Vagina (tissue), 2 donors: ENCODE measurements at regions of chr17 and their contacts with region 1.

Region 1: DNA sequence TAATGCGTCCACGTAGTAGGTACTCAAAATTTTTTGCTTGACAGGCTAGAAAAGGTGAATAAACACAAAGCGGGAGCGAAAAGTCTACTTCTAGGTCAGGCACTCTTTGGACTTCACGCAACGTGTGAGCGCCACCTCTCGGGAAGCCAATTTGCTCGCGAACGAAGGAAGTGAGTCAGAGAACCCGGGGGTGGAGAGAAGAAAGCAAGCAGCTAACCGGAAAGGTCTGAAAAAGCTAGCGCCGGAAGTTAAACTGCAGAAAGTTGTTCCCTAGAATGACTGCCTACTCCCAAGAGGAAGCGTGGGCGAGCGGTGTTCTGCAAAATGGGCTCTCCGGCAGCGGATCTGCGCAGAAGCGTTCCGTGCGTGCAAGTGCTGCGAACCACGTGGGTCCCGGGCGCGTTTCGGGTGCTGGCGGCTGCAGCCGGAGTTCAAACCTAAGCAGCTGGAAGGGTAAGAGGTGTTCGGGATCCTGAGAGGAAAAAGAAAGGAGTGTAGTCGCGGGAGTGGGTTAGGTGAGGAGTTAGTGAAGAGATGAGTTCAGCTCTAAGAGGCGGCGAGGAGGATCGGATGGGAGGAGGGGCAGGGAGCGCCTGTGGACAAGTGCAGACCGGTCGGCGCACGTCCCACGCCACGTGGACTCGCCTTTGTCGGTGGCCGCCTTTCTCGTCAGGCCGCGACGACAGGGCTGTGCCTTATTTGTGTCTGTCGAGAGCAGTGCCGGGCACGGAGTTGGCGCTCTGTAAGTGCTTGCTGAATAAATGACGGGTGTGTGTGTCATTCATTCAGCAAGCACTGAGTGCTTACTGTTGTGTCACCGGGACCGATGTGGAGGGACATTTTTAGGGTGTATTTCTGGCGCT is at the start of gene NME1:
- DNase-seq: peak; percentile 99 to 100
- H3K4me3 ChIP-seq: peak within 1 kb of the TSS; percentile 58 to 76
- H3K27ac ChIP-seq: peak within 1 kb of the TSS; percentile 95
- H3K4me1 ChIP-seq: peaks cover 24% of the 10 kb centered on the region
- H3K27me3 ChIP-seq: no peaks in the 10 kb centered on the region
- CTCF ChIP-seq: peak; percentile 16 to 82 (median 78)
- POLR2A ChIP-seq: no peak
- total RNA-seq, gene NME1: 50.8 TPM

Region 2: DNA sequence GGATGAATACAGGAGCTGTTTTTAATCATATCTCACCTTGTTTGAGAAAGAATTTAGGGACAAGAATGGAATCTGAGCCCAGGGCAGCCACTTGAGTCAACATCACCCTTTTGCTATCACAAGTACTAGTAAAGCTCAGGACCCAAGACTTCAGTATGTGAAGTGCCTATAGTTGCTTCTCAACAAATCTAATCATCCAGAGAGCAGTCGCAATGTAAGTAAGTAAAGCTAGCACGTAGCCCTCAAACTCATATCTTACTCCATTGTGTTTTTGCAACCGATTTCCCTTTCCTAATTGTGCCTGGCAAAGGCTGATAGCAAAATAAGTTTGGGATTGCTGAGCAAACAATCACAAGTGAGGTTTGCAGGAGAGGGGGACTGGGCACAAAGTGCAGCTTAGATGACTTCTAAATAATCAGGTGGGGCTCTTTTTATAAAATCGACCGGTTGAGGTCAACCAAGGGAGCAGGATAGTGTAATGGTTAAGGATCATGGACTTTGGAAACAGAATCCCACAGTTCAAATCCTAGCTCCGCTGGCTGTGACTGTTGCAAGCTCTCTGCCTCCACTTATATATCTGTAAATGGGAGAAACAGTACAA is 300.3 kb before region 1 on chr17:
- intact Hi-C with region 1: loop called (anchors 10 kb)
- DNase-seq: peak in 1 of 2 donors; percentile 49
- H3K4me3 ChIP-seq: no peak overlapping the region
- H3K27ac ChIP-seq: peak overlapping the region; percentile 80
- H3K4me1 ChIP-seq: no peaks in the 10 kb centered on the region
- H3K27me3 ChIP-seq: no peaks in the 10 kb centered on the region
- CTCF ChIP-seq: no peak
- POLR2A ChIP-seq: no peak

Region 3: DNA sequence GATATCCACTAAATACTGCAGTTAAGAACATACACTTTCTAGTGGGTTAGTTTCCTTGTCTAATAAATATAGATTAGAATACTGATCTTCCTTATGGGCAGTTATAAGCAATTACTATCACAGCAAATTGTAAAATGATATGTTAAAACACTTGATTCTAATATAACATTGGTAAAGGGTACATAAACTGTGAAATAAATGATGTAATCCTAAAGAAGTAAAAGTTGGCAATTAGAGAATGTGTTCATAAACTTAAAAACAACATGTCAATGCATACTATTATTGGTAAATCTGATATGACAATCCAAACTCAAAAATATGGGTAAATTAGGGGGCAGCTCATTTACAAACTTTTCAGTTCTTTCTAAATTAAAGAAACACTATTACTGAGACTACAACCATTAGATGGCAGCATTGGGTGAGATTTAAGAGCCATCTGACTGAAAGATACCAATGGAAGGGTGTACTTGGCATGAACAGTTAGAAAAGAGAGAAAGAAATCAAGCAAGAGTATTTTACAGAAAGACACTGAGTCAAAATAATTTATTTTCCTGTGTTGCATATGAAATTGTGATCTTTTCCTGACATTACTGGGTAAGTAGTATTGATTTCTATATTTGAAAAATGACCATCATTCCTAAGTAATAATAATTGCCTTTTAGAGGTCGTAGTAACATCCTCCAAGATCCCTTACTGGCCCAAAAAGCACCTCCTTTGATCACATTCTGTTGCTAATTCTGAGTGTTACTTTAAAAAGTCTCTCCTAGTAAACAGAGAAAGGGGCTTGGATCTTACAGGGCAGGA is 152.4 kb before region 1 on chr17:
- intact Hi-C with region 1: loop called (anchors 5 kb)
- DNase-seq: no peak
- H3K4me3 ChIP-seq: no peak overlapping the region
- H3K27ac ChIP-seq: no peak overlapping the region
- H3K4me1 ChIP-seq: no peaks in the 10 kb centered on the region
- H3K27me3 ChIP-seq: no peaks in the 10 kb centered on the region
- CTCF ChIP-seq: peak; percentile 41 to 63 (median 44)
- POLR2A ChIP-seq: no peak